ENCODE measurements at regions of chr4 and their contacts with region 1.

Region 1: GRCh38 chr4:16264798-16265197 is 38.5 kb upstream of the TAPT1 start:
- DNase-seq: no peak
- ATAC-seq: peak; percentile 66
- H3K4me3 Mint-ChIP-seq: no peak overlapping the region
- H3K27ac Mint-ChIP-seq: no peak overlapping the region
- H3K4me1 Mint-ChIP-seq: peaks cover 19% of the 10 kb centered on the region
- H3K27me3 Mint-ChIP-seq: no peaks in the 10 kb centered on the region

Region 2: GRCh38 chr4:15963001-15963451 is 301.8 kb before region 1 on chr4 and contains the start of gene FGFBP2:
- CTCF ChIA-PET with region 1: interaction called, 5 read pairs
- POLR2A ChIA-PET with region 1: no interaction called
- intact Hi-C with region 1: loop called in 1 of 2 experiments (anchors 2 kb)
- DNase-seq: peak; percentile 85
- ATAC-seq: peak; percentile 85
- H3K4me3 Mint-ChIP-seq: peak within 1 kb of the TSS; percentile 13
- H3K27ac Mint-ChIP-seq: peak within 1 kb of the TSS; percentile 59
- H3K4me1 Mint-ChIP-seq: peaks cover 23% of the 10 kb centered on the region
- H3K27me3 Mint-ChIP-seq: peaks cover 2% of the 10 kb centered on the region
- total RNA-seq, gene FGFBP2: 2.5 to 3.2 TPM

Region 3: GRCh38 chr4:16026160-16026761 is 238.5 kb before region 1 on chr4:
- CTCF ChIA-PET with region 1: interaction called, 56 read pairs
- POLR2A ChIA-PET with region 1: no interaction called
- intact Hi-C with region 1: loop called (anchors 1 kb)
- DNase-seq: peak; percentile 19
- ATAC-seq: no peak
- H3K4me3 Mint-ChIP-seq: no peak overlapping the region
- H3K27ac Mint-ChIP-seq: no peak overlapping the region
- H3K4me1 Mint-ChIP-seq: peaks cover 9% of the 10 kb centered on the region
- H3K27me3 Mint-ChIP-seq: peaks cover 7% of the 10 kb centered on the region

Region 4: DNA sequence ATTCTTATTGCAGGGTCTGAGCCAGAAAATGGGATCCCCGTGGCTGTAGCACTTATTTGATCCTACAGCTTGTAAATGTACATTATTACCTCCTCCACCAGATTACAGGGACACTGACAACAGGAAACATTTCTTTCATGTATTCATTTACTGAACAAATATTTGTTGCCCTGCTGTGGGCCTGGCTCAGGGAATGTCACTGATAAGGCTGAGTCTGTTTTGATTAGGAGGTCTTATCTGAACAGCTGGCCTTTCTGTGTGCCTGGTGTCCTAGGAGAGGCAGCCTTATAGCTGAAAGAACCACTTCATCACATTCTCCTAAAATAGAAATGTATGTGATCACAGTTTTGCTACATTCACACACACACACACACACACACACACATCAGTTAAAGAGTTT is 135.5 kb before region 1 on chr4:
- CTCF ChIA-PET with region 1: no interaction called
- POLR2A ChIA-PET with region 1: no interaction called
- intact Hi-C with region 1: no loop called
- DNase-seq: no peak
- ATAC-seq: no peak
- H3K4me3 Mint-ChIP-seq: no peak overlapping the region
- H3K27ac Mint-ChIP-seq: no peak overlapping the region
- H3K4me1 Mint-ChIP-seq: peaks cover 2% of the 10 kb centered on the region
- H3K27me3 Mint-ChIP-seq: peaks cover 1% of the 10 kb centered on the region

Region 5: DNA sequence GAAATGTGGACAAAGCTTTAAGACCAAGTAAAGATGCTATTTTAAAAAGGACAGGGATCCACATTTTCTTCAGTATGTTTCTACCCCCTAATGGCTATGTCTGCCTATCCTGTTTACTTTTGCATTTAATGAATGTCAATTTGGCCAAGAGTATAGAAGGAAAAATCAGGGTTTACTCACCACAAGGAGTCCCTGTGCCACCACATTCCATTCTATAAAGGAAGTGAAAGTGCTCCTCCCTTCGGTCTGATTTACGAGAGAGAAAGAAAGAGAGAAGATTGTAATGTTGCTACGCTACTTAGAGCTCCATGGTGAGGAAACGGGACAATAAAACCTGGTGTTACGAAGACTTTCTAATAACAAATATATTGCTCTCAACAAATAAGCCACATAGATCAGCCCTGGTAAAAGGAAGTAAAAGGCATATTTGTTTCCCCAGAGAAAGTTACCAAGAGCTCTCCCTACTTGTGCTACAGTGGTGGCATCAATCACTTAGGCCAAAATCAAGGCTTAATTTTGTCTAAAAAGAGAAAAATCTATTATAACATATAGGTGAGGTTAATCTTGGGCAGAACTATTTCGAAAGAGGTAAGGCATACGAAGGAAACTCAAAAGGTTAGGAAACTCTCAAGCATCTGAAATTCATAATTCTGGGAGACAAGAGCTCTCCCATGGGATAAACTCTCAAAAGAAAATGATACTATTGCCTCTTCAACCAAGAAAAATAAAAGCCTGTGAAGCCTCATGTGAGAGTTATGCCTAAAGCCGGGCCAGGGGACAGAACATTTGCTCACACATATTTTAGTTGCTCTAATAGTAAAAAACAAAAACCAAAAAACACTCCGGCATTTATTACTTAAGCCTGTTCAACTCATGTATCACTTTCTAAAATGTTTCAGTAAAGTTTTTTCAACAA is 68.1 kb before region 1 on chr4:
- CTCF ChIA-PET with region 1: interaction called, 13 read pairs
- POLR2A ChIA-PET with region 1: no interaction called
- intact Hi-C with region 1: no loop called
- DNase-seq: no peak
- ATAC-seq: peak; percentile 19
- H3K4me3 Mint-ChIP-seq: no peak overlapping the region
- H3K27ac Mint-ChIP-seq: peak overlapping the region; percentile 4
- H3K4me1 Mint-ChIP-seq: peaks cover 36% of the 10 kb centered on the region
- H3K27me3 Mint-ChIP-seq: no peaks in the 10 kb centered on the region

Region 6: GRCh38 chr4:16205298-16206164 is 59.3 kb before region 1 on chr4:
- CTCF ChIA-PET with region 1: interaction called, 13 read pairs
- POLR2A ChIA-PET with region 1: interaction called, 3 read pairs
- intact Hi-C with region 1: loop called (anchors 2 kb)
- DNase-seq: no peak
- ATAC-seq: peak; percentile 68
- H3K4me3 Mint-ChIP-seq: no peak overlapping the region
- H3K27ac Mint-ChIP-seq: peak overlapping the region; percentile 16
- H3K4me1 Mint-ChIP-seq: peaks cover 51% of the 10 kb centered on the region
- H3K27me3 Mint-ChIP-seq: no peaks in the 10 kb centered on the region

Region 7: DNA sequence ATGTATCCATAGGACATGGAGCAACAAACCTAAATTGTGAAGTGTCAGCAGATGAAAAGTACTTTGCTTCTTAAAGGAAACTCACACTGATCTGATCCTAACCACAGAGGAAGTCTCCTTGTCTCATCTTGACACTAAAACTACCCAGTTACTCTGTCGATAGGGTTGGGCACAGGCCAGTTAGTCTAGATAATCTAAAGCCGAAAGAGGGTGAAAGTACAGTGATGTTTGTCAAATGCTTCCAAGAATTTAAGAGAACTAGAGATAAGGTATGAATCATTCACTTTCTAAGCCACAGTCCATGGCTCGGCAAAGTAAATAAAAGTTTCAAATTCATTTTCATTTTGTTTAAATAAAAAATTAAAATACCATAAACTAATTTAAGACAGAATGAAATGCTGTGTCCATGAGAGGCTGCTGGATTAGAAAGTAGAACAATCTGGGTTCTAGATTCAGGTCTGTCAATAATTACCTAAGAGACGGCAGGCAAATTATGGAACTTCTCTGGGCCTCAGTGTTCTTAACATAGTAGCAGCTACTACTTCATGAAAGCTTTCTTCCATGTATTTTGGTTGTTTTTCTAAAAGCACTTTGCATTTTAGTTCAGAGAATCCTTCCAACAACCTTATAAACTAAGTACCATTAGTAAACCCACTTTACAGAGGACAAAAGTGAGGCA is 457.0 kb after region 1 on chr4:
- CTCF ChIA-PET with region 1: no interaction called
- POLR2A ChIA-PET with region 1: no interaction called
- intact Hi-C with region 1: no loop called
- DNase-seq: no peak
- ATAC-seq: no peak
- H3K4me3 Mint-ChIP-seq: no peak overlapping the region
- H3K27ac Mint-ChIP-seq: no peak overlapping the region
- H3K4me1 Mint-ChIP-seq: no peaks in the 10 kb centered on the region
- H3K27me3 Mint-ChIP-seq: no peaks in the 10 kb centered on the region

Region 8: DNA sequence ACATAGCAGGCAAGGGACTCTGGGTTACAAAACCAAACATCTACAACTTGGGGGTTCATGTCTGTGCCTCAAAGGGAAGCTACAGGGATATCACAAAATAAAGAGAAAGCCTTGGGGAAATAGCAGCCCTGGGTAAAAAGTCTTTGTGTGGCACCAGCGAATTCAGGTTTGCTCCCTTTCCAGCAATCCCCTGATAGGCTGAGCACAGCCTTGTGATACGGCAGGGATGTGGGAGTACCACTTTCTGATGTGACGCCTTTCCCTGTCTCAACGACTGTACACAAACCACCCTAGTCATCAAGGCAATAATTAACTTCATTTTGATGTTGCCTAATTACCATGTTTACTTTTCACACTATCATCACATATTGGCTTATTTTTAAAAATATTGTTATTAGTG is 468.7 kb after region 1 on chr4:
- CTCF ChIA-PET with region 1: no interaction called
- POLR2A ChIA-PET with region 1: no interaction called
- intact Hi-C with region 1: no loop called
- DNase-seq: no peak
- ATAC-seq: no peak
- H3K4me3 Mint-ChIP-seq: no peak overlapping the region
- H3K27ac Mint-ChIP-seq: no peak overlapping the region
- H3K4me1 Mint-ChIP-seq: no peaks in the 10 kb centered on the region
- H3K27me3 Mint-ChIP-seq: no peaks in the 10 kb centered on the region

Region 9: DNA sequence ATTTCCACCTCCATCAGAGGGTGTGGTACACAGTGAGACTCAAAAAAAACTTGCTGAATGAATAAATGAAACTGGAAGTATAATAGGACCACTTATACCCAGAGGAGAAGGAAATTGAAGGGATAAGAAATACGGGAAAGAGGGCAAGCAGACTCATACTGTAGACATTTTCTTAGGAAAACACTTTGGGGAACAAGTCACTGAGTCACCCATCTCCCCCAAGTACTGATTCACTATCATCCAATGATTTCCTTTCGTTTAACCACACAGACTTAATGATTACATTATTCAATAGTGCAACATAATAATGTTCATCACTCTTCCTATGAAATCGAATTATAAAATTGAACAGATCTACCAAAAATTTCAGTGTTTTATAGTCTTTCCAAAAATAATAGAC is 536.6 kb after region 1 on chr4:
- CTCF ChIA-PET with region 1: no interaction called
- POLR2A ChIA-PET with region 1: no interaction called
- intact Hi-C with region 1: no loop called
- DNase-seq: no peak
- ATAC-seq: no peak
- H3K4me3 Mint-ChIP-seq: no peak overlapping the region
- H3K27ac Mint-ChIP-seq: no peak overlapping the region
- H3K4me1 Mint-ChIP-seq: no peaks in the 10 kb centered on the region
- H3K27me3 Mint-ChIP-seq: no peaks in the 10 kb centered on the region